ENCODE measurements at regions of chr1 and their contacts with region 1.

Region 1: DNA sequence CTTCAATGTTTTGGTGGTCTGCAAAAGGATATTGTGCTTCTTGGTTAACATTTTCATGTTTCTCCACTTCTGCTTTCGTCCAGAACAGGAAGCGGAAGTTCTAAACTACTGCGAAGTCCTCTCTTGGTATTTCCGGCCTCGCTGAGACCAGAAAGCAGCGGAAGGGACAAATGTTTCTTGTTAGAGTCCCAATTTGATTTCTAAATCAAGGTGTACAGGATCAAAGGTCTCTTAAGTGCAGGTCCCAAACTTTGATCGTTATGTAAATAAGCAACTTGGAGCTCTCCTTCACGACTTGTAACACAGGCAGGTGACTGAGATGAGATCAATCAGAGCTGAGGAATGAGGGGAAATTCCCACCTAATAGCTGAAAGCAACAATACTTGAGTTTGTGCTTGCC is 40.1 kb upstream of the HMCN1 start:
- DNase-seq: no peak
- ATAC-seq: peak; percentile 82
- H3K4me3 Mint-ChIP-seq: peak overlapping the region; percentile 86
- H3K27ac Mint-ChIP-seq: peak overlapping the region; percentile 98
- H3K4me1 Mint-ChIP-seq: peaks cover 22% of the 10 kb centered on the region
- H3K27me3 Mint-ChIP-seq: peaks cover 9% of the 10 kb centered on the region
- CTCF ChIP-seq: no peak

Region 2: GRCh38 chr1:184051485-184052193 is 1642.4 kb before region 1 on chr1 and contains the start of gene TSEN15:
- CTCF ChIA-PET with region 1: no interaction called
- POLR2A ChIA-PET with region 1: interaction called, 3 read pairs
- intact Hi-C with region 1: loop called (anchors 10 kb)
- DNase-seq: peak; percentile 76
- ATAC-seq: peak; percentile 95
- H3K4me3 Mint-ChIP-seq: peak within 1 kb of the TSS; percentile 98
- H3K27ac Mint-ChIP-seq: peak within 1 kb of the TSS; percentile 98
- H3K4me1 Mint-ChIP-seq: peaks cover 36% of the 10 kb centered on the region
- H3K27me3 Mint-ChIP-seq: peaks cover 26% of the 10 kb centered on the region
- CTCF ChIP-seq: no peak
- total RNA-seq, gene TSEN15: 60.8 and 61.2 TPM in 2 replicates

Region 3: GRCh38 chr1:184805667-184806295 is 888.3 kb before region 1 on chr1:
- CTCF ChIA-PET with region 1: interaction called, 23 read pairs
- POLR2A ChIA-PET with region 1: no interaction called
- intact Hi-C with region 1: loop called (anchors 1 kb)
- DNase-seq: peak; percentile 62
- ATAC-seq: peak; percentile 93
- H3K4me3 Mint-ChIP-seq: no peak overlapping the region
- H3K27ac Mint-ChIP-seq: peak overlapping the region; percentile 48
- H3K4me1 Mint-ChIP-seq: peaks cover 13% of the 10 kb centered on the region
- H3K27me3 Mint-ChIP-seq: no peaks in the 10 kb centered on the region
- CTCF ChIP-seq: peak; percentile 82

Region 4: GRCh38 chr1:185044981-185045813 is 648.9 kb before region 1 on chr1 and contains the start of gene RNF2:
- CTCF ChIA-PET with region 1: no interaction called
- POLR2A ChIA-PET with region 1: no interaction called
- intact Hi-C with region 1: loop called (anchors 5 kb)
- DNase-seq: peak; percentile 84
- ATAC-seq: peak; percentile 92
- H3K4me3 Mint-ChIP-seq: peak within 1 kb of the TSS; percentile 92
- H3K27ac Mint-ChIP-seq: peak within 1 kb of the TSS; percentile 91
- H3K4me1 Mint-ChIP-seq: peaks cover 31% of the 10 kb centered on the region
- H3K27me3 Mint-ChIP-seq: no peaks in the 10 kb centered on the region
- CTCF ChIP-seq: no peak
- total RNA-seq, gene RNF2: 23.4 and 24.5 TPM in 2 replicates

Region 5: GRCh38 chr1:185170291-185170848 is 523.7 kb before region 1 on chr1:
- CTCF ChIA-PET with region 1: interaction called, 13 read pairs
- POLR2A ChIA-PET with region 1: no interaction called
- intact Hi-C with region 1: loop called (anchors 1 kb)
- DNase-seq: peak; percentile 30
- ATAC-seq: peak; percentile 83
- H3K4me3 Mint-ChIP-seq: peak overlapping the region; percentile 19
- H3K27ac Mint-ChIP-seq: no peak overlapping the region
- H3K4me1 Mint-ChIP-seq: peaks cover 8% of the 10 kb centered on the region
- H3K27me3 Mint-ChIP-seq: no peaks in the 10 kb centered on the region
- CTCF ChIP-seq: peak; percentile 82

Region 6: GRCh38 chr1:185603158-185603557 is 90.9 kb before region 1 on chr1:
- CTCF ChIA-PET with region 1: interaction called, 3 read pairs
- POLR2A ChIA-PET with region 1: interaction called, 3 read pairs
- intact Hi-C with region 1: loop called (anchors 1 kb)
- DNase-seq: peak; percentile 26
- ATAC-seq: peak; percentile 92
- H3K4me3 Mint-ChIP-seq: no peak overlapping the region
- H3K27ac Mint-ChIP-seq: no peak overlapping the region
- H3K4me1 Mint-ChIP-seq: peaks cover 42% of the 10 kb centered on the region
- H3K27me3 Mint-ChIP-seq: no peaks in the 10 kb centered on the region
- CTCF ChIP-seq: no peak

Region 7: DNA sequence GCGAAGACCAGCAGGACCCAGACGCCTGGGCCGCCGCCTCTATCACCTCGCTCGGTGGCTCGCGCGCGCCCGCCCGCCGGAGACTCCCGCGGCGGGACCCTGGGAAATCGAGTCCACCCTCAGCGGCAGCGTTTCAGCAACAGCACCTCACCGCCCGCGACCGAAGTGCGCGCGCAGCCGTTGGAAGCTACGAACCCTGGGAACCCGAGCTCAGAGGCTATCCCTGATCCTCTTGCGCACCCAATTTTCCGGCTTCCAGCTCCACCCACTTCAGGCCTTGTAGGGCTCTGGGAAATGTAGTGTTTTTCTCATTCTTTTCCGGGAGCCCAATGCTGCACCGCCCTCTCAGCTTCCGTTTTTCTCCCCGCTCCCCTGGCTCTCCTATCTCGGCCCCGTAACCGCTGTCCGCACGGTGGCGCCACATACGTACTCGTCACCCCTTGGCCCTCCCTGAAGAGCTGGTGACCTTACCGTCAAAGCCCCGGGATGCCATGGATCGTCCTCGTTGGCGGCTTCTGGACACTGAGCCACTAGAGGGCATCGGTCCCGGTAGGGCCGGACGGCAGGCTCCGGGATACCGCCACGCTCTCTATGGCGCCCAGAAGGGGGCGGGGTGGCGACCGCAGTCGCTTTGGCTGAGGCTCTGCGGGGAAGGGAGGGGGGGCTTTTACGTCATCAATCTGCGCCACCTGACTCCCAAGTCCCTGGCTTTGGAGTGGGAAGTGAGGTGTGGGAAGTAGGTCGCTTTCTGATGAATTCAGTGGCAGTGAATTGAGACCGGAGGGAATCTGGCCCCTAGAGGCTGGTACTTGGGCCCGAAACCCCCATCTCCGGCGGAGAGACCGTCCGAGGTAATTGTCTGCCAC is 681.2 kb after region 1 on chr1 and contains the starts of genes ODR4 and TPR:
- CTCF ChIA-PET with region 1: interaction called, 3 read pairs
- POLR2A ChIA-PET with region 1: interaction called, 3 read pairs
- intact Hi-C with region 1: loop called (anchors 1 kb)
- DNase-seq: peak; percentile 93
- ATAC-seq: peak; percentile 82
- H3K4me3 Mint-ChIP-seq: peak within 1 kb of the TSS; percentile 92
- H3K27ac Mint-ChIP-seq: peak within 1 kb of the TSS; percentile 92
- H3K4me1 Mint-ChIP-seq: peaks cover 31% of the 10 kb centered on the region
- H3K27me3 Mint-ChIP-seq: no peaks in the 10 kb centered on the region
- CTCF ChIP-seq: peak; percentile 53
- total RNA-seq, gene ODR4: 11.9 and 15.6 TPM in 2 replicates
- total RNA-seq, gene TPR: 112 and 125 TPM in 2 replicates

Measured in activated B cell treated with CpG ODN at 0.5 μM for 24 hours (primary cell).